CD4-positive, alpha-beta T cell (primary cell): ENCODE measurements at regions of chr16 and their contacts with region 1.

Region 1: GRCh38 chr16:68229431-68230198 is 6.3 kb downstream of the ESRP2 start:
- DNase-seq: peak in 11 of 14 experiments; percentile 28 to 72 (median 46)
- ATAC-seq: peak; percentile 61
- H3K4me3 ChIP-seq: no peak overlapping the region
- H3K4me3 Mint-ChIP-seq: no peak overlapping the region
- H3K27ac ChIP-seq: no peak overlapping the region
- H3K27ac Mint-ChIP-seq: peak overlapping the region; percentile 67
- H3K4me1 ChIP-seq: peaks cover 23% of the 10 kb centered on the region
- H3K4me1 Mint-ChIP-seq: peaks cover 40% of the 10 kb centered on the region
- H3K27me3 ChIP-seq: no peaks in the 10 kb centered on the region
- H3K27me3 Mint-ChIP-seq: no peaks in the 10 kb centered on the region
- CTCF ChIP-seq: peak; percentile 95

Region 2: DNA sequence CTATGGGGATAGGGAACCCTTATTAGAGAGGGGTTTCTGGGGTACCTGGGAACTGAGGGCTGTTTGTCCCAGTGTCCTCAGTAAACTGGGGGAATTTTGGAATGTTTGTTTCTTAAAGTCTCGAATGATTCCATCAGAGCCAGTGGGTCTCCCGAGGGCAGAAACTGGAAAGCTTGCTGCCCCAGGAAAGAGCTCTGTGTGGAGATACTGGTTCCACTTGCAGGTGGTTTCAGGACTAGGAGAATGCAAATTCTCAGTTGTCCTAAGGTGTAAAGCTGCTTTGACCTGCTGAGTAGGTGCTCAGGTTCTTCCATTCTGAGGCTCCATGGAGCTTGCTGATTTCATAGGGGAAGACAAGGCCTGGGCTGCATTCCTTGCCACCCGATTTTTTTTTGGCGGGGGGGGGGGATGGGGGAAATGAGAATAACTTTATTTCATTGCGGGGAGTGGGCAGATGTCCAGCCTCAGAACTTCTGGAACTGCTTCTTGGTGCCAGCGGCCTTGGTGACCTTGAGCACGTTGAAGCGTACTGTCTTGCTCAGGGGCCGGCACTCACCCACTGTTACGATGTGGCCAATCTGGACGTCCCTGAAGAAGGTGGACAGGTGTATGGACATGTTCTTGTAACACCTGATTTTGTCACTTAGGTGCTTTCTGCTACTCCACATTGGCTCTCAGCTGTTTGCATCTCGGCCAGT is 374.0 kb before region 1 on chr16:
- CTCF ChIA-PET with region 1: no interaction called
- POLR2A ChIA-PET with region 1: no interaction called
- intact Hi-C with region 1: no loop called
- DNase-seq: no peak
- ATAC-seq: no peak
- H3K4me3 ChIP-seq: no peak overlapping the region
- H3K4me3 Mint-ChIP-seq: no peak overlapping the region
- H3K27ac ChIP-seq: no peak overlapping the region
- H3K27ac Mint-ChIP-seq: peak overlapping the region; percentile 47
- H3K4me1 ChIP-seq: peaks cover 31% of the 10 kb centered on the region
- H3K4me1 Mint-ChIP-seq: peaks cover 31% of the 10 kb centered on the region
- H3K27me3 ChIP-seq: no peaks in the 10 kb centered on the region
- H3K27me3 Mint-ChIP-seq: no peaks in the 10 kb centered on the region
- CTCF ChIP-seq: no peak

Region 3: GRCh38 chr16:67883872-67884261 is 345.7 kb before region 1 on chr16:
- CTCF ChIA-PET with region 1: interaction called, 3 read pairs
- POLR2A ChIA-PET with region 1: no interaction called
- intact Hi-C with region 1: loop called (anchors 2 to 5 kb)
- DNase-seq: peak; percentile 60 to 85 (median 72)
- ATAC-seq: peak; percentile 88
- H3K4me3 ChIP-seq: no peak overlapping the region
- H3K4me3 Mint-ChIP-seq: no peak overlapping the region
- H3K27ac ChIP-seq: no peak overlapping the region
- H3K27ac Mint-ChIP-seq: no peak overlapping the region
- H3K4me1 ChIP-seq: no peaks in the 10 kb centered on the region
- H3K4me1 Mint-ChIP-seq: no peaks in the 10 kb centered on the region
- H3K27me3 ChIP-seq: no peaks in the 10 kb centered on the region
- H3K27me3 Mint-ChIP-seq: no peaks in the 10 kb centered on the region
- CTCF ChIP-seq: peak; percentile 91

Region 4: DNA sequence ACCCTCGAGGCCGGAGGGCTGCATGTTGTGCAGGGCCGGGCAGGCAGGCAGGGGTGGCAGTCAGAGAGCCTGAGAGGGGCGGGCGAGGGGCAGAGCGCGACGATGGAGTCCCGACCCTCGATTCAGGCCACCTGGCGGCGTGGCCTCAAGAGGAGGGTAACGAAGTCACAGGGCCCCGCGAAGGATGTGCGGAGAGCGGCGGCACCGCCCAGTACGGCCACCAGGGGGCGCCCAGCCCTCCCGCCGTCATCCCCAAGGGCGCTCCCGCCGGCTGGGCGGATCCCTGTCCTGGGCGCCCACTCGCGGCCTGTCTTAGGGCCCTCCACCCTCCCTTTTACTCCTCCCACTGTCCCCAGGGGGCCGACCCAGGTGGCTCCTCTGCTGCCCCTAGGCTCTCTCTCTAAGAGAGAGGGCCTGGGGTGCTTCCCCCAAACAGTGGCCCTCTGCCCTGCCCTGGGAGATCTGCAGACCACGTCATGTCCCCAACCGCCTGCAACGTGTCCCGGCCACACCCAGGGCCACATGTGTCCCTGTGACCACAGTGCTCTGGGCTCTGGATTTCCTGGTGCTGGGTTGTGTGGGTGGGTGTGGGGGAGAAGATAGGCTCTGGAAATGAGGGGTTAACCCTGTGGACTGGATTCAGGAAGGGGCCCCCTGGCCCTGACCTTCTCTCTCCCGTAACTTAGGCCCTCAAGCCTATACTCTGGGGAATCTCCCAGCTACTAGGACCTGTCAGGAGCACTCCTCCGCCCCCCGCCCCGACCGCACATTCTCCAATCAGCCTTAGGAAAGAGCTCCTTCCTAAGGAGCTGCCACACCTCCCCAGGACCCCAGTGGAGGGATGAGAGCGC is 236.2 kb before region 1 on chr16:
- CTCF ChIA-PET with region 1: no interaction called
- POLR2A ChIA-PET with region 1: no interaction called
- intact Hi-C with region 1: loop called (anchors 1 to 2 kb)
- DNase-seq: peak; percentile 69 to 93 (median 78)
- ATAC-seq: peak; percentile 91
- H3K4me3 ChIP-seq: peak overlapping the region; percentile 63
- H3K4me3 Mint-ChIP-seq: peak overlapping the region; percentile 89
- H3K27ac ChIP-seq: peak overlapping the region; percentile 76 to 90
- H3K27ac Mint-ChIP-seq: peak overlapping the region; percentile 93
- H3K4me1 ChIP-seq: peaks cover 55% of the 10 kb centered on the region
- H3K4me1 Mint-ChIP-seq: peaks cover 36% of the 10 kb centered on the region
- H3K27me3 ChIP-seq: no peaks in the 10 kb centered on the region
- H3K27me3 Mint-ChIP-seq: no peaks in the 10 kb centered on the region
- CTCF ChIP-seq: peak; percentile 92

Region 5: DNA sequence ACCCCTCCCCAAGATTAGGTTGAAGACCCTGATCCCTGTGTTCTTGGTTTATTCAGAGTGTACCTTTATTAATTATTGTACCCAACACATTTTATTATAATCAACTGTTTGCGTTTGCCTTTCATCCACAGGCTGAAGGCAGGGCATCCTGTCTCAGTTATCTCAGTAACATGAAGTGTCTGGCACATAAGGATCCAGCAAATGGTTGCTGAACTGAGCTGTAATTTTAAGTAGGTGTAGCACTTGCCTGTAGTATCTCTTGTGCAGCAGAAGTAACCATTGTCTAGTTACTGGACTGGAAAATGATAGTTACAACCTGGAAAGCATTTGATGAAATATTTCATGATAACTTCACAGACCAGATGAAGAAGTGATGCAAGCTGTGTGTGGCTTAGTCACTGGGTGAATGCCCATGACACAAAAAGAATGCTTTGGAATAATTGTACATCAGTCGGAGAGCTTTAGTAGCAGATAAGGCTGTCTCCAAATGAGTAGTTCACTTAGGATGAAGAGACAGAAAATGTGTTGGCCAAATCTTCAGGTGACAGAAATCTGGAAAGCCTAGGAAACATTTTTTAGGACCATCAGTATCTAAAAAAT is 50.3 kb before region 1 on chr16:
- CTCF ChIA-PET with region 1: interaction called, 5 read pairs
- POLR2A ChIA-PET with region 1: interaction called, 4 read pairs
- intact Hi-C with region 1: loop called in 1 of 2 experiments (anchors 5 kb)
- DNase-seq: no peak
- ATAC-seq: no peak
- H3K4me3 ChIP-seq: no peak overlapping the region
- H3K4me3 Mint-ChIP-seq: no peak overlapping the region
- H3K27ac ChIP-seq: no peak overlapping the region
- H3K27ac Mint-ChIP-seq: peak overlapping the region; percentile 70
- H3K4me1 ChIP-seq: no peaks in the 10 kb centered on the region
- H3K4me1 Mint-ChIP-seq: peaks cover 12% of the 10 kb centered on the region
- H3K27me3 ChIP-seq: no peaks in the 10 kb centered on the region
- H3K27me3 Mint-ChIP-seq: no peaks in the 10 kb centered on the region
- CTCF ChIP-seq: no peak

Region 6: DNA sequence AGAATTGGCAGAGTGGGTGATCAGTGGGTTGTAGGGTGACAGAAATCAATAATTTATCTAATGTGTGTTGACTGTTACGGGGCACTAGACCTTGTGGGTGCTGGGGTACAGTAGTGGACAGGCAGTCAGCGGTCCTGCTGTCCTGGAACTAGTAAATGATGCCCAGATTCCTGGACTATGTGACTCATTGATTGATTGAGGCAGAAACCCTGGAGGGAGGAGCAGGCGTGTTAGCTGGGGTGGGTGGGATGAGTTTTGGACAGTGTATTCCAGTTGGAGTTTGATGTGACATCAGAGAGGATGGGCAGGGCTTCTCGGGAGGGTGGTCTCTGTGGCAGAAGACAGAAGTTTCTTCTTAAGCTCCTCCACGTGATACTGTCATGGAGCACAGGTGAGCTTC is 105.6 kb after region 1 on chr16:
- CTCF ChIA-PET with region 1: no interaction called
- POLR2A ChIA-PET with region 1: no interaction called
- intact Hi-C with region 1: no loop called
- DNase-seq: no peak
- ATAC-seq: no peak
- H3K4me3 ChIP-seq: no peak overlapping the region
- H3K4me3 Mint-ChIP-seq: no peak overlapping the region
- H3K27ac ChIP-seq: no peak overlapping the region
- H3K27ac Mint-ChIP-seq: no peak overlapping the region
- H3K4me1 ChIP-seq: peaks cover 15% of the 10 kb centered on the region
- H3K4me1 Mint-ChIP-seq: peaks cover 12% of the 10 kb centered on the region
- H3K27me3 ChIP-seq: no peaks in the 10 kb centered on the region
- H3K27me3 Mint-ChIP-seq: no peaks in the 10 kb centered on the region
- CTCF ChIP-seq: no peak